ENCODE measurements at regions of chr3 and their contacts with region 1.

Region 1: DNA sequence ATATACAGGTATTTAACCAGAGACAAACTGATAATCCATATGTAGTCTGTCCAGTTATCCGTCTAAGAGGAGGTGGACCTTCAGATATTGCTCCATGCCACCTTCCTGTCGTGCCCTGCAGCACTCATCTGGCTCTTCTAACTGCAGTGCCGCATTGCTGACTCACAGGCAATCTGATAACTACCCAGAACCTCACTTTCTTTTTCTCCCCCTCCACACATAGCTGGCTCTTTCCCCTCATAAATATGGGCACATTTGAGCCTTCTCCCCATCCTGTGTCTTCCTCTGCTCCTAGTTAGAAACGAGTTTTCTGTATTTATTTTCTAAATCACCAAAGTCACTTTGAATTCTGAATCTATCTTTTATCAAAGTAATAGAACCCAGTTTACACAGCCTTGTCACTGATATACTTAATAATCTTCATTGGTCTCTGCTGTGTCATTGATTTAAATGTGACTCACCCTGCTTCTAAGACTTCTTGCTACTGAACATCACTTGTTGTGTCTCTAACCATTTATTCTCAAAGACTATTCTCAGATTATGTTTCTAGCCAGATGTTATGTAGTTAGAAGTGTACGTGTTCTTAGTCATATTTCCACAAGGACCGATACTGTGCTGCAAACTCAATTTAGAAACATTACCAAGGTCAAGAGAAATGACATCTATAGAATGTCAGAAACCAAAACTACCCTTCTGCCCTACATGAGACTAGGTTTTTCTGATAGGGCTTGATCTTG is 17.4 kb upstream of the KCNMB2 start:
- DNase-seq: no peak
- H3K4me3 ChIP-seq: no peak overlapping the region
- H3K27ac ChIP-seq: no peak overlapping the region
- H3K4me1 ChIP-seq: no peaks in the 10 kb centered on the region
- H3K27me3 ChIP-seq: no peaks in the 10 kb centered on the region
- CTCF ChIP-seq: no peak
- POLR2A ChIP-seq: no peak

Region 2: GRCh38 chr3:178367817-178368617 is 150.8 kb before region 1 on chr3:
- intact Hi-C with region 1: loop called (anchors 10 kb)
- DNase-seq: no peak
- H3K4me3 ChIP-seq: no peak overlapping the region
- H3K27ac ChIP-seq: no peak overlapping the region
- H3K4me1 ChIP-seq: no peaks in the 10 kb centered on the region
- H3K27me3 ChIP-seq: no peaks in the 10 kb centered on the region
- CTCF ChIP-seq: no peak
- POLR2A ChIP-seq: no peak

Region 3: GRCh38 chr3:178671791-178672190 is 153.0 kb after region 1 on chr3:
- intact Hi-C with region 1: no loop called
- DNase-seq: no peak
- H3K4me3 ChIP-seq: no peak overlapping the region
- H3K27ac ChIP-seq: no peak overlapping the region
- H3K4me1 ChIP-seq: no peaks in the 10 kb centered on the region
- H3K27me3 ChIP-seq: no peaks in the 10 kb centered on the region
- CTCF ChIP-seq: no peak
- POLR2A ChIP-seq: no peak

Region 4: DNA sequence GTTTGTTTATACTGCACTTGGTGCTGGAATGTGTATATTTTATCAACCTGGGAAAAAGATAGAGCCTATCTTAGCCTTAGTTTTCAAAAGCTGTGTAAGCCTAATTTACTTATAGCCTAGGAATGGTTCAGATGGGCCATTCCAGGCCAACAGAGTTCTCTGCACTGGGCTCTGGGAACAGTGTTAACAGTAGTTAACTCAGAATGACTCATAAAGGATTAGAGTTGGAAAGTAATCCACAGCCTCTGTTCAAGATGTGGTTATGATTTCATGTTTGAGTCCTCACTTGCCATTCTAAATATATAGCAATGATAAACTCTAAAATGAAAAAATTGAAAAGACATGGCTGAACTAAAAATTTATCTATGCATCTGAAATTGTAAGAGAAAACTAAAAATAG is 1540.5 kb after region 1 on chr3:
- intact Hi-C with region 1: no loop called
- DNase-seq: no peak
- H3K4me3 ChIP-seq: no peak overlapping the region
- H3K27ac ChIP-seq: no peak overlapping the region
- H3K4me1 ChIP-seq: no peaks in the 10 kb centered on the region
- H3K27me3 ChIP-seq: no peaks in the 10 kb centered on the region
- CTCF ChIP-seq: no peak
- POLR2A ChIP-seq: no peak

Measured in breast epithelium (tissue), 4 donors.